ENCODE measurements at regions of chr12 and their contacts with region 1.

Region 1: GRCh38 chr12:45990468-45991283 is at the start of gene SCAF11:
- DNase-seq: peak; percentile 100
- ATAC-seq: peak; percentile 79
- H3K4me3 Mint-ChIP-seq: peak within 1 kb of the TSS; percentile 93
- H3K27ac Mint-ChIP-seq: peak within 1 kb of the TSS; percentile 100
- H3K4me1 Mint-ChIP-seq: peaks cover 34% of the 10 kb centered on the region
- H3K27me3 Mint-ChIP-seq: no peaks in the 10 kb centered on the region
- total RNA-seq, gene SCAF11: 132 to 145 TPM

Region 2: GRCh38 chr12:45543906-45544315 is 446.8 kb before region 1 on chr12:
- CTCF ChIA-PET with region 1: interaction called, 6 read pairs
- POLR2A ChIA-PET with region 1: no interaction called
- intact Hi-C with region 1: loop called in 1 of 2 experiments (anchors 5 kb)
- DNase-seq: peak; percentile 65
- ATAC-seq: peak; percentile 97
- H3K4me3 Mint-ChIP-seq: no peak overlapping the region
- H3K27ac Mint-ChIP-seq: no peak overlapping the region
- H3K4me1 Mint-ChIP-seq: peaks cover 4% of the 10 kb centered on the region
- H3K27me3 Mint-ChIP-seq: peaks cover 4% of the 10 kb centered on the region

Region 3: GRCh38 chr12:45852508-45852907 is 138.2 kb before region 1 on chr12:
- CTCF ChIA-PET with region 1: no interaction called
- POLR2A ChIA-PET with region 1: no interaction called
- intact Hi-C with region 1: no loop called
- DNase-seq: no peak
- ATAC-seq: no peak
- H3K4me3 Mint-ChIP-seq: no peak overlapping the region
- H3K27ac Mint-ChIP-seq: no peak overlapping the region
- H3K4me1 Mint-ChIP-seq: no peaks in the 10 kb centered on the region
- H3K27me3 Mint-ChIP-seq: no peaks in the 10 kb centered on the region

Region 4: DNA sequence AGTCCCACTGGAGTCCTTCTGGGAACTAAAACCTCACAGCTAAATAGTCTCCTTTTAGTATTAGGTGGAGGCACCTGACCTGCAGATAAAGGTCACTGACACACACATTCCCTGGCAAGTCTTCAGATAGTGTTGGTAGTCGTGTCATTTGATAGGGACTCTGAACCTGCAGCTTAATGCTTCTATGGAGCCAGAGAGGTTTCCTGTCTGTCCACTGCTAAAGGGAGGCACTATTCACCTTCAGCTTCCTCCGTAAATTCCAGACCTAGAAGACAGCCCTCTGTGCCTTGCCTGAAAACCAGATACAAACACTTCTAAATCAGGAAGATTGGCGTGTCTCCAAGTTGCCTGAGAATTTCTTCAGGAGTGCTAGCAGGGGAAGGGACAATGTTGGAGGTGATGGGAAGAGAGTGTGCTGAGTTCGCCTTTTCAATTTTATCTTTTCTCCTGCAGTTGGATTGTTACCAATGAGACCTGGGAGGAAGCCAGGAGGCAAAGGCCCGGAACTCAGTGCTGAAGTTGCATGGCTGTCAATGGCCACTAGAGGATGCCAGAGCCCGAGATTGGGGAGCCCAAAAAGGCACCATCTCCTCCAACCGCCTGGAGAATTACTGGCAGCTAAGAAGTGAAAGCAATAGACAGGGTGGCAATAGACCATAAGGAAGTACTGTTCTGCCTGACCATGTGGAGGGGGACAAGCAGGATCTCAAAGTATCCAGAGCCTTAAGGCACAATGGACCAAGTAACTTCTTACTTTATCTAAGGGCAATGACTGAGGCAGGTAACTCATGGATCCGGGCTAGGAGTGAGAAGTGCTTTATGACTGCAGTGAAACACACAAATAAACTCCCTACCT is 81.3 kb after region 1 on chr12:
- CTCF ChIA-PET with region 1: interaction called, 5 read pairs
- POLR2A ChIA-PET with region 1: no interaction called
- intact Hi-C with region 1: loop called in 1 of 2 experiments (anchors 2 kb)
- DNase-seq: peak; percentile 80
- ATAC-seq: peak; percentile 98
- H3K4me3 Mint-ChIP-seq: no peak overlapping the region
- H3K27ac Mint-ChIP-seq: peak overlapping the region; percentile 47
- H3K4me1 Mint-ChIP-seq: peaks cover 3% of the 10 kb centered on the region
- H3K27me3 Mint-ChIP-seq: peaks cover 2% of the 10 kb centered on the region

Region 5: DNA sequence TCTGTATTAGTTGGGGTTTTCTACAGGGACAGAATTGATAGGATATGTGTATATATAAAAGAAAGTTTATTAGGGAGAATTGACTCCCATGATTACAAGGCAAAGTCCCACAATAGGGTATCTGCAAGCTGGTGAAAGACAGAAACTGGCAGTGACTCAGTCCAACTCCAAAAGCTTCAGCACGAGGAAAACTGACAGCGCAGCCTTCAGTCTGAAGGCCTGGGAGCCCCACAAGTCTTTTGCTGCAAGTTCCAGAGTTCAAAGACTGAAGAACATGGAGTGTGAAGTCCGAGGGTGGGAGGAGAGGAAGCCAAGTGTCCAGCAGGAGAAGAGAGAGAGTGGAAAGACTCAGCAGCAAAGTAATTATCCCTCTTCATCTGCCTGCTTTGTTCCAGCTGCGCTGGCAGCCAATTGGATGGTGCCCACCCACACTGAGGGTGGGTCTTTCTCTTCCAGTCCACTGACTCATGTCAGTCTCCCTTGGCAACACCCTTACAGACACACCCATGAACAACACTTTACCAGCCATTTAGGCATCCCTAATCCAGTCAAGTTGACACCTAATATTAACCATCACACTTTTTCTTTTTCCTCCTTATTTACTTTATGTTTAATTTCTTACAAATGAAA is 110.3 kb after region 1 on chr12:
- CTCF ChIA-PET with region 1: no interaction called
- POLR2A ChIA-PET with region 1: no interaction called
- intact Hi-C with region 1: no loop called
- DNase-seq: no peak
- ATAC-seq: no peak
- H3K4me3 Mint-ChIP-seq: no peak overlapping the region
- H3K27ac Mint-ChIP-seq: no peak overlapping the region
- H3K4me1 Mint-ChIP-seq: no peaks in the 10 kb centered on the region
- H3K27me3 Mint-ChIP-seq: peaks cover 9% of the 10 kb centered on the region

Region 6: DNA sequence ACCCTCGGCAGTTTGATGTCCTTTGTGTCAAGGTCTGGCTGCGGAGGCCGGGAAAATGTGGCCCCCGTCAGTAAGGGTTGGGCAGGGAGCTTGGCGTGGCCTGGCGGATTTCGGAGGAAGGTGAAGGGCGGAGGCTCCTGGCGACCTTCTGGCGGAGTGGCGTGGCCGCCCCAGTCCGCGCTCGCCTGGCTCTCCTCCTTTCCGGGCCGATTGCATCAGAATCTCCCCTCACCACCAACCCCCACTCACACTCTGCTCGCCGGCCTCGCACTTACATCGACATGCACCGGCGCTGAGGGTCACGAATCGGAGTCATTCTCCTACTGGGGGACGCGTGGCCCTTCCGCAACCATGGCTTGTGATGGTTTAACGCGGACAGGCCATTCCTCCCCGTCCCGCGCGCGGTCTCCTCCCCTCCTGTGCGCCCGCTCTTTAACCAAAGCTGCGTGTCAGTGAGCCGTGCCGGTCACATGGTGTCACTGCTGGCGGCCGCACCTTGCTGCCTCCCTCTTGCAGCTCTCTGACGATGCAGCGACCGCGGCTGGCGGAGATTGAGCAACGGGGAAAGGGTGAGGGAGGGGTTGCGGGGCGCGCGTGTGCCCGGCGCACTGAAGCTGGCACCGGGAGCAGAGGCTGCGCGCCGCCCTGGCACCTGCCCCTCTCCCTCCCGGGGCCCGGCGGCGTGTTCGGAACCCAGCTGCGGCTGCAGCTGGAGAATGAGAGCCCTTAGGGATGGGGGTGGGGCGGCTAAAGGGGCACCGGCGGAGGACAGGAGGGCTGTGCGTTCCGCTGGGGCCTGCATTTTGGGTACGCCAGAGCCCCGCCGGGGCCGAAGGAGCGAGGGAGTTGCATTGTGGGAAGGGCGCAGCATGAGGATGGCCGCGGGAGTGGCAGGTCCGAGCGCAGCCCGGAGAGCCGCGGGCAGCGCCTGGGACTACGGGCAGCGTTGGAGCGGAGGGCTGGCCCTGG is 278.2 kb after region 1 on chr12 and contains the start of gene SLC38A1:
- CTCF ChIA-PET with region 1: no interaction called
- POLR2A ChIA-PET with region 1: interaction called, 8 read pairs
- intact Hi-C with region 1: loop called (anchors 1 to 2 kb)
- DNase-seq: peak; percentile 94
- ATAC-seq: peak; percentile 61
- H3K4me3 Mint-ChIP-seq: no peak within 1 kb of the TSS
- H3K27ac Mint-ChIP-seq: no peak within 1 kb of the TSS
- H3K4me1 Mint-ChIP-seq: peaks cover 30% of the 10 kb centered on the region
- H3K27me3 Mint-ChIP-seq: no peaks in the 10 kb centered on the region
- total RNA-seq, gene SLC38A1: 167 to 180 TPM

Region 7: GRCh38 chr12:46546634-46547286 is 556.1 kb after region 1 on chr12:
- CTCF ChIA-PET with region 1: no interaction called
- POLR2A ChIA-PET with region 1: no interaction called
- intact Hi-C with region 1: loop called in 1 of 2 experiments (anchors 5 kb)
- DNase-seq: peak; percentile 45
- ATAC-seq: peak; percentile 33
- H3K4me3 Mint-ChIP-seq: no peak overlapping the region
- H3K27ac Mint-ChIP-seq: peak overlapping the region; percentile 58
- H3K4me1 Mint-ChIP-seq: peaks cover 58% of the 10 kb centered on the region
- H3K27me3 Mint-ChIP-seq: no peaks in the 10 kb centered on the region

Region 8: DNA sequence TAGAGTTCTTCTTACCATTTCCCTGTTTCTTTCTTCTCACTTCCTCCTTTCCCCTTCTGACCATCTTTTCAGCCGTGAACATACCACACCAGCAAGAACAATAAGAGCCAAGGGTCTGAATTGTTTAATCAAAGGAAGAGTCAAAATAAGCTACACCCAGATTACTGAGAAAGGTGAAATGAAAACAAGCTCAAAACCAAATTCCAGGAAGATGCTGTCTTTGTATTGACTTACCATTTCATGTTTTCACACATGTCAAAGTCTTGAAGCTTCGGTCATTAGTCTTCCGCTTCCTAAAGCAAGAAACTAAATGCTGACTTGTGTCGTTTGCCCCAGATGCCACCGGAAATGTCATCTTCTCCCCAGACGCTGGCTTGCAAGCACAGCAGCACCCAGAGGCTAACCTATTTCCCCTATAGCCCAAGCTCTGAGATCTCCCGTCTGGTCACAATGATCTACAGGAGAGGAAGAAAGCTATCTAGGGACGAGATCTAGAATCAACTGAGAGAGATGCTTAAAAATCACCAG is 1225.5 kb after region 1 on chr12:
- CTCF ChIA-PET with region 1: no interaction called
- POLR2A ChIA-PET with region 1: no interaction called
- intact Hi-C with region 1: loop called in 1 of 2 experiments (anchors 10 kb)
- DNase-seq: peak; percentile 81
- ATAC-seq: peak; percentile 43
- H3K4me3 Mint-ChIP-seq: peak overlapping the region; percentile 89
- H3K27ac Mint-ChIP-seq: peak overlapping the region; percentile 96
- H3K4me1 Mint-ChIP-seq: peaks cover 38% of the 10 kb centered on the region
- H3K27me3 Mint-ChIP-seq: no peaks in the 10 kb centered on the region